BJ (cell line): ENCODE measurements at regions of chr17 and their contacts with region 1.

Region 1: DNA sequence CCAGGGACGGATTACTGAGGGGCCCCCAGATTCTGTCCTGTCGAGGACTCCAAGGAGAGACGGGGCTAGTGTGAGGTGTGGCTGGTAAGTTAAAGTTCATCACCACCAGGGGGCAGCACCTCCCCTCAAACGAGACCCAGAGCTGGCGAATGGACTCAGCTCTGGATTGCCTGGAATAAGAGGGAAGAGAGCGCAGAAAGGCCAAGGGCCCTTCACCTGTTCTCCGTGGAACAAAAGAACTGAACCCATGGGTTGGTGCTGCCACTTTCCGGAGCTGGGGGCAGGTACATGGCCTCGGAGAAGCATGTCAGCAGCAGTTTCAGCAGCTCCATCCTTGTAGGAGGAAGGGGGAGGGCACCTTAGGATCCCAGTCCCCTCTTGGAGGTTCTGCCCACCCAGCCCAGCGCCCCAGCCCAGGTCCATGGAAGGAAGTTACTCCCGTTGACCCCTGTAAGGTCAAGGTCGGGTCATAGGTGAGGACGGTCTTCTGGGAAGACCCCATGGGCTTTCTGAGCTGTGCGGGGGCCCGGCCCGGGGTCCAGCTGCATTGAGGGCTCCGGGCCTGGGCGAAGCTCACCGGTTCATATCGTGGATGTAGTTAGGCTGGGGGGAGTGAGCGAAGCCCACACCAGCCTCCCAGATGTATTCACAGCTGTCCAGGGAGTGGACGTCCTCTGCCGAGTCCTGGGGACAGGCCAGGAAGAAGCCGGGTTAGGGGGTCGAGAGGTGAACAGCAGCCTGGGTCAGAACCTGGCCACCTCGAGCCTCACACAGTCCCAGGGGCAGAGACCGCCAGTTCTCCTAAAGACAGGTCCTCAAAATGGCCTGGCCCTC is 10.7 kb downstream of the HID1 start:
- DNase-seq: no peak
- H3K4me3 ChIP-seq: no peak overlapping the region
- H3K27me3 ChIP-seq: peaks cover under 1% of the 10 kb centered on the region; the same call in 1 of the 2 replicates
- CTCF ChIP-seq: peak; percentile 70

Region 2: DNA sequence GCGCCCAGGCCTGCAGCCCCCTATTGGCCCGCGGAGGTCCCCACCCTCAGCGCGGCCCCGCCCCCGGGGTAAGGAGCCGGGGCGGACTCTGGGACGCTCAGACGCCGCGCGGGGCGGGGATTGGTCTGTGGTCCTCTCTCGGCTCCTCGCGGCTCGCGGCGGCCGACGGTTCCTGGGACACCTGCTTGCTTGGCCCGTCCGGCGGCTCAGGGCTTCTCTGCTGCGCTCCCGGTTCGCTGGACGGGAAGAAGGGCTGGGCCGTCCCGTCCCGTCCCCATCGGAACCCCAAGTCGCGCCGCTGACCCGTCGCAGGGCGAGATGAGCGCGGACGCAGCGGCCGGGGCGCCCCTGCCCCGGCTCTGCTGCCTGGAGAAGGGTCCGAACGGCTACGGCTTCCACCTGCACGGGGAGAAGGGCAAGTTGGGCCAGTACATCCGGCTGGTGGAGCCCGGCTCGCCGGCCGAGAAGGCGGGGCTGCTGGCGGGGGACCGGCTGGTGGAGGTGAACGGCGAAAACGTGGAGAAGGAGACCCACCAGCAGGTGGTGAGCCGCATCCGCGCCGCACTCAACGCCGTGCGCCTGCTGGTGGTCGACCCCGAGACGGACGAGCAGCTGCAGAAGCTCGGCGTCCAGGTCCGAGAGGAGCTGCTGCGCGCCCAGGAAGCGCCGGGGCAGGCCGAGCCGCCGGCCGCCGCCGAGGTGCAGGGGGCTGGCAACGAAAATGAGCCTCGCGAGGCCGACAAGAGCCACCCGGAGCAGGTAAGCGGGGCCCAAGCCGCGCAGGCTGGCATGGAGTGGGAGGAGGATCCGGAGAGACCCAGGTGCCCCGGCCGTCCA is 213.1 kb before region 1 on chr17 and contains the start of gene NHERF1:
- CTCF ChIA-PET with region 1: interaction called, 18 read pairs
- POLR2A ChIA-PET with region 1: no interaction called
- DNase-seq: peak; percentile 66
- H3K4me3 ChIP-seq: peak within 1 kb of the TSS; percentile 64
- H3K27me3 ChIP-seq: no peaks in the 10 kb centered on the region
- CTCF ChIP-seq: peak; percentile 16; the same call in 1 of the 2 replicates
- polyA plus RNA-seq, gene NHERF1: 13.7 and 16.3 TPM in 2 replicates

Region 3: GRCh38 chr17:74935585-74936469 is 26.0 kb before region 1 on chr17 and contains the start of gene OTOP3:
- CTCF ChIA-PET with region 1: interaction called, 21 read pairs
- POLR2A ChIA-PET with region 1: no interaction called
- DNase-seq: no peak
- H3K4me3 ChIP-seq: no peak within 1 kb of the TSS
- H3K27me3 ChIP-seq: peaks cover 49% of the 10 kb centered on the region
- CTCF ChIP-seq: no peak
- polyA plus RNA-seq, gene OTOP3: not detected in 2 replicates

Region 4: DNA sequence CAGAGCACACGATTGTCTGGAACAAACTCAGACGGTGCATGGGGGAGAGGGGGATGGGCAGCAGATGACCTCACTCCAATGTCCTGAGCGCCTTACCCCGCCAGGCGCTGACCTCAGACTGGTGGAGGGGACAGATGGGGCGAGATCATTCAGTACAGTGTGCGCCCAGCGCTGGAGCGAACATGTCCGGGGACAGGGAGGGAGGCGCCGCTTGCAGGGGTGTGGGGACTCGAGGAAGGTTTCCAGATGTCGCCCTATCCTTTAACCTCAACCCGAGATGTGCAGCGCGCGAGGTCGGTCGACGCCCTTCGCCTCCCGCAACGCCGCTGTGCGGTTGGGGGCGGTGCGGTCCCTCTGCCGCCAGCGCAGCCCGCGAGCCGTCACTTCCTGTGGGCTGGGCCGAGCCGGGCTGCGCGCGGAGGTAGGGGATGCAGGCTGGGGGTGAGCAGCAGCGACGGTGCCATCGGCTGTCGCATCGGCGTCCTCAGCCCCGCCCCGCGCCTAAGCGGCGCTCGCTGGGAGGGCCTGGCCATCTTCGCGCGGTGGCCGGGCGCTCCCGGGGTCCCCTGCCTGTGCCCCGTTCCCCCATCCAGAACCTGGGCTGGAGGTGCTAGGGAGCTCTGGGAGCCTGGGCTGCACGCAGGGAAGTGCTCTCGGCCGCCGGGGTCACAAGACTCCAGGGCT is 20.2 kb after region 1 on chr17:
- CTCF ChIA-PET with region 1: interaction called, 19 read pairs
- POLR2A ChIA-PET with region 1: no interaction called
- DNase-seq: no peak
- H3K4me3 ChIP-seq: peak overlapping the region; percentile 61
- H3K27me3 ChIP-seq: peaks cover 1% of the 10 kb centered on the region; the same call in 1 of the 2 replicates
- CTCF ChIP-seq: no peak

Region 5: GRCh38 chr17:75012346-75013091 is 50.6 kb after region 1 on chr17 and contains the start of gene MRPL58:
- CTCF ChIA-PET with region 1: interaction called, 52 read pairs
- POLR2A ChIA-PET with region 1: no interaction called
- DNase-seq: no peak
- H3K4me3 ChIP-seq: peak within 1 kb of the TSS; percentile 69
- H3K27me3 ChIP-seq: no peaks in the 10 kb centered on the region
- CTCF ChIP-seq: peak; percentile 72
- polyA plus RNA-seq, gene MRPL58: 44.2 and 50.8 TPM in 2 replicates

Region 6: GRCh38 chr17:75059369-75060345 is 97.8 kb after region 1 on chr17:
- CTCF ChIA-PET with region 1: interaction called, 26 read pairs
- POLR2A ChIA-PET with region 1: no interaction called
- DNase-seq: peak; percentile 65
- H3K4me3 ChIP-seq: no peak overlapping the region
- H3K27me3 ChIP-seq: no peaks in the 10 kb centered on the region
- CTCF ChIP-seq: peak; percentile 60